HepG2 (cell line): ENCODE measurements at regions of chr5 and their contacts with region 1.

Region 1: DNA sequence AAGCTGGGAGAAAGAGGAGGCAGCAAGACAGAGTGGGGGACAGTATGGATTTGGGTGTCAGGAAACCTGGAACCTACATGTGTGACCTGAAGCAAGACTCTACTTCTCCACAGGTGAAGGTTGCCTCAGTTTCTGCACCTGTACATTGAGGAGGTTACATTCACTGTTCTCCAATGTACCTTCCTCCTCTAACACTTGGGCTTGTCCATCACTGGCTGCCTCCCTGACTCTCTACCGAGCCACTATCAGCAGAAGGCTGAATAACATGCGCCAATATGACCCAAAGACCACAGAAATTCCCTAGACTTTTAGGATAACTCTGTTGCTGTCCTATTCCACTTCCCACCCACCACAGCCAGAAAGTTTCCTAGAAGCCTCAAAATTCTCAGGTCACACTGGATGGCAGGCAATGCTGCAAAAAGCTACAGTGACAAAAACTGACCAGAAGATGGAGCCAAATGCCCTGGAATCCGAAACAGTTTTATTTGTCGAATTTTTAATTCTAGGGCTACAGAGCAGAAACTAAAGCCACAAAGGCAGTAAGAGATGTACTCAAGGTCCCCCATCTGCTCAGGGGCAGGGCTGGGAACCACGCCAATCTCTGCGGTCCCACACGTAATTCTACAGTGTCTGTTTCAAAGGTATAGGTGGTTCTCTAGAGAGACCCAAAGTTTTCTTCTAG is 64.4 kb downstream of the FAM114A2 start:
- DNase-seq: peak; percentile 25
- ATAC-seq: peak; percentile 82
- H3K4me3 ChIP-seq: no peak overlapping the region
- H3K27ac ChIP-seq: no peak overlapping the region
- H3K4me1 ChIP-seq: no peaks in the 10 kb centered on the region
- H3K27me3 ChIP-seq: peaks cover 2 to 22% of the 10 kb centered on the region in 2 experiments; a peak in 4 of 5 replicates
- CTCF ChIP-seq: peak; percentile 77
- EP300 ChIP-seq: no peak
- POLR2A ChIP-seq: no peak
- RAD21 ChIP-seq: peak; percentile 43; the same call in 1 of the 2 replicates

Region 2: GRCh38 chr5:154002093-154002492 is 27.8 kb after region 1 on chr5:
- CTCF ChIA-PET with region 1: no interaction called
- POLR2A ChIA-PET with region 1: no interaction called
- in situ Hi-C with region 1: no loop called
- intact Hi-C with region 1: no loop called
- DNase-seq: no peak
- ATAC-seq: no peak
- H3K4me3 ChIP-seq: no peak overlapping the region
- H3K27ac ChIP-seq: no peak overlapping the region
- H3K4me1 ChIP-seq: no peaks in the 10 kb centered on the region
- H3K27me3 ChIP-seq: no peaks in the 10 kb centered on the region
- CTCF ChIP-seq: no peak
- EP300 ChIP-seq: no peak
- POLR2A ChIP-seq: no peak
- RAD21 ChIP-seq: no peak

Region 3: DNA sequence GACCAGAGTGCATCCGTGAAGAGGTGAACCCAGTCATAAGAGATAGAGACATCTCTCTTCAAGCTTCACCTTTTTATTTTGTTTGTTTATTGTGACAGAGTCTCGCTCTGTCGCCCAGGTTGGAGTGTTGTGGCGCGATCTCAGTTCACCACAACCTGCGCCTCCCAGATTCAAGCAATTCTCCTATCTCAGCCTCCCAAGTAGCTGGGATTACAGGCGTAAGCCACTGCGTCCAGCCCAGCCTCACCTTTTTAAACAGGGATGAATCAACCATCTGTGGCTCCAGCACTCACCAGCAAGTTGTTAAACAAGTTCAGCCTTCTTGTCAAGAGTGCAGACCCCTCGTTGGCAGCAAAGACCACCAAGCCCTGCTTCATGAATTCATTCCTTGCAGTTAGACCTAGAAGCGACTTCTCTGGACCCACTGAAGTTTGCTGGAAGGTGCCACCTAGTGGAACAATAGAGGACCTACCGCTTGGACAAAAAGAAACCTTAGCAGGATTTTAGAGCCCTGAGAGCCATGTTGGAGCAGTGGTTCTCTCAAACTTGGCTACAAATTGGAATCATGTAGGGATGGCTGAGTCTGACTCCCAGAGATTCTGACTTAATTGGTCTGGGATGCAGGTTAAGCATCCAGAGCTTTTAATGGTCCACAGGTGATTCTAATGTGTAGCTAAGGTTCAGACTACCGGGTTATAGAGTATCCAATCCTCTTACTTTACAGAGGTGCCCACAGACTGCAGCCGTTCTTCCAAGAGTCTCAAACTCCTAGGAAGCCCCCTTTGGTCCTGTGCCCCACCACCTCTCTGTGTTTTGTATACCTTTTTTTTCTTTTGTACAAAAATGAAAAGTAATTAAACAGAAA is 205.8 kb after region 1 on chr5:
- CTCF ChIA-PET with region 1: interaction called, 10 read pairs
- POLR2A ChIA-PET with region 1: no interaction called
- in situ Hi-C with region 1: loop called (anchors 10 kb)
- intact Hi-C with region 1: loop called (anchors 1 kb)
- DNase-seq: peak; percentile 60
- ATAC-seq: peak; percentile 98
- H3K4me3 ChIP-seq: no peak overlapping the region
- H3K27ac ChIP-seq: no peak overlapping the region
- H3K4me1 ChIP-seq: no peaks in the 10 kb centered on the region
- H3K27me3 ChIP-seq: no peaks in the 10 kb centered on the region; a peak in 1 of 5 replicates
- CTCF ChIP-seq: peak; percentile 80
- EP300 ChIP-seq: no peak
- POLR2A ChIP-seq: no peak
- RAD21 ChIP-seq: peak; percentile 37; the same call in 1 of the 2 replicates

Region 4: DNA sequence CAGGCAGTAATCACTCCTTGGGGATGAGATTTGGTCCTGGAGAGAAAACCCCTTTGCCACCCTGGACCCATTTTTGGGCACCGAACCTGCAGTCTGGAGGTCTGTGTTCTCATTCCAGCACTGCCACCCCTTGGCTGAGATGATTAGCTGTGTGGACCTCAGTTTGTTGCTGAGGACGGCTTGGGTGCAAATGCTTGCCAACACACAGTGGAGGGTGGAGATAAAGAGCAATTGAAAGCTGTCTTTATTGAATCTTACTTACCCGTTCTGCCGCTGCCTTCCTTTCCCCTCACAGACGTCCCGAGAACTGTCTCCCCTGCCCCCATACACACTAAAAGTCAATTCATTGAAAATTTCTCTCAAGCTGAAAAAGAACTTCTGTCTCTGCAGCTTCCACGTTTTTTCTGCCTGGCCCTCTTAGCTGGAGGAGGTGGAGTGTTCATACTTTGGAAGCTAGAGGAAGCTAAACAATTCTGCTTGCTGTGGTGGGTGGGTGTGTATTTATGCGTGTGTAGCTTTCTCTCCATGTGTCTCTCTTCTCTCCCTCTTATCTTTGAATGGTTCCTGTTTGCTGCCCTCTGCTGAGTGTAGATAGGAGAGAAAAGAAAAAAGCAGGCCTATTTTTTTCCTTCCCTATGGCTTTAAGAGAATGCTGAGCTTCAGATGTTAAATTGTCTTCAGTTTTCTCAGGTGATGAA is 222.8 kb after region 1 on chr5:
- CTCF ChIA-PET with region 1: no interaction called
- POLR2A ChIA-PET with region 1: no interaction called
- in situ Hi-C with region 1: no loop called
- intact Hi-C with region 1: loop called (anchors 5 kb)
- DNase-seq: peak; percentile 46
- ATAC-seq: peak; percentile 68
- H3K4me3 ChIP-seq: no peak overlapping the region
- H3K27ac ChIP-seq: no peak overlapping the region
- H3K4me1 ChIP-seq: peaks cover 37% of the 10 kb centered on the region
- H3K27me3 ChIP-seq: no peaks in the 10 kb centered on the region
- CTCF ChIP-seq: peak; percentile 45
- EP300 ChIP-seq: no peak
- POLR2A ChIP-seq: no peak
- RAD21 ChIP-seq: no peak

Region 5: DNA sequence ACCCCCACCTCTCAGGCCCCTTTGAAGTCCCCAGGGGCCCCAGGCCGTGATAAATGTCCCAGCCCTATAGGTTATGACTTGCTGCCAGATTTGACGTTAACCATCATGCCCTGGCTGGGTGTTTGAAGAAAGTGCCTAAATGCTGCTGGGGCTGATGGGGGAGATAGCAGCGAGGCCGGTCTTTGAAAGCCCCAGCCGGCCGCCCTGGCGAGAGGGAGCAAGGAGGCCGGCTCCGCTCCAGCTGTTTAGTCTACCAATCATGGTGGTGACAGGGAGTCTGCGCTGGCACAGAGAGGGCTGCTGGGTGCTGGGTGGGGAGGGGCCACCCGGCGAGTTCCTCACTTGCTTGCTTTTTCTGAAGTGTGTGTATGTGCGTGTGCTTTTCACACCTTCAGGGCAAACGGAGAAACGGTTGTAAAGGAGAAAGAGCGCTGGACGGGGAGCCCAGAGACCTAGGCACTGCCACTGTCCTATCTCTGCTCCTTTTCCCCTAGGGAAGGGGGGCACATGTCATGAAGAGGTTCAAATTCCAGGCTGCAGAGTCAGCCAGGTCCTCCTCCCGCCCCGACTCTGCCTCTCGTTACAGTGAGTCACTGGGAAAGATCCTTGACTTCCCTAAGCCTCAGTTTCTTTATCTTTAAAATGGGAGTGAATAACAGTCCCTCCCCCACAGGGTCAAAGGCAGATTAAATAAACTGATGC is 629.9 kb after region 1 on chr5:
- CTCF ChIA-PET with region 1: no interaction called
- POLR2A ChIA-PET with region 1: no interaction called
- in situ Hi-C with region 1: no loop called
- intact Hi-C with region 1: loop called (anchors 10 kb)
- DNase-seq: no peak
- ATAC-seq: peak; percentile 72
- H3K4me3 ChIP-seq: peak overlapping the region in 1 of 3 experiments; percentile 36; a peak in 1 of 6 replicates
- H3K27ac ChIP-seq: no peak overlapping the region
- H3K4me1 ChIP-seq: no peaks in the 10 kb centered on the region
- H3K27me3 ChIP-seq: peaks cover 7 to 40% of the 10 kb centered on the region in 2 experiments; a peak in 3 of 5 replicates
- CTCF ChIP-seq: no peak
- EP300 ChIP-seq: no peak
- POLR2A ChIP-seq: no peak
- RAD21 ChIP-seq: no peak

Region 6: DNA sequence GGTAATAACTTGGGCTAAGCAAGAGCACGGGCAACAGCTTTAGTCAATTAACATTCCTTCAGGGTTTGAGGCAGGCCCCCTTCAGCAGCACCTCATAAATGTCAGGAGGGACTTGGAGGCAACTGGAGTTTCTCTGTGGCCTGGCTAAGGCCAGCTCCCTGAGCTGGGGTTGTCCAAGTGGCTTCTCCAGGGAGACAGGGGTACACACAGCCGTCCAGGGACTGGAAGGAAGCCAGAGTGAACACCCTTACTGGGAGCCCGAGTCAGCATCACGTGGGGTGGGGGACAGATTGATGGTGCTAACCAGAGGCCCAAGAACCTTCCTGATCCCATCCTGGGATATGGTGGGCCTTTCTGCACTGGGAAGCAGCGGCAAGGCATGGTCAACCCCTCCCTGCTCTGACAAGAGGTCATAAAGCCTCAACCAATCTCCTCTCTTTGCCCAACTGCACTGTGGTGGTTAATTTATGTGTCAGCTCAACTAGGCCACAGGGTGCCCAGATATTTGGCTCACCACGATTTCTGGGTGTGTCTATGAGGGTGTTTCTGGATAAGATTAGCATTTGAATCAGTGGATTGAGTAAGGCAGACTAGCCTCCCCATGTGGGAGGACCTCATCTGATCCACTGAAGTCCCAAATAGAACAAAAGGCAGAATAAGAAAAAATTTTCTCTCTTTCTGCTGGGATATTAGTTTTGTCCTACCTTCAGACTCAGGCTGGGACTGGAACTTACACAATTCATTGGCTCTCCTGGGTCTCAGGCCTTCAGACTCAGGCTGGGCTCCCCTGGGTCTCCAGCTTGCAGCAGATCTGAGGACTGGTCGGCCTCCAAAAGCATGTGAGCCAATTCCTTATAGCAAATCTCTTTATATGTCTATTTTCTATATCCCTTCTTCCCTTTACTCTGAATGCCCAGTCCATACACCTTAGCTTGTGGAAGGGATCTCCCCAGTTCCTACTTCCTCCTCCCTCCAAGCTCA is 653.7 kb after region 1 on chr5:
- CTCF ChIA-PET with region 1: no interaction called
- POLR2A ChIA-PET with region 1: no interaction called
- in situ Hi-C with region 1: loop called (anchors 10 kb)
- intact Hi-C with region 1: no loop called
- DNase-seq: no peak
- ATAC-seq: no peak
- H3K4me3 ChIP-seq: no peak overlapping the region
- H3K27ac ChIP-seq: no peak overlapping the region
- H3K4me1 ChIP-seq: no peaks in the 10 kb centered on the region
- H3K27me3 ChIP-seq: peaks cover 0 to 17% of the 10 kb centered on the region in 2 experiments; a peak in 2 of 5 replicates
- CTCF ChIP-seq: no peak
- EP300 ChIP-seq: no peak
- POLR2A ChIP-seq: no peak
- RAD21 ChIP-seq: no peak